Colonic mucosa (tissue), 4 donors: ENCODE measurements at regions of chr9 and their contacts with region 1.

Region 1: GRCh38 chr9:112361601-112362000 is 18.3 kb upstream of the HSDL2 start:
- DNase-seq: no peak
- H3K4me3 ChIP-seq: no peak overlapping the region
- H3K27ac ChIP-seq: no peak overlapping the region
- H3K4me1 ChIP-seq: no peaks in the 10 kb centered on the region
- H3K27me3 ChIP-seq: no peaks in the 10 kb centered on the region
- CTCF ChIP-seq: peak; percentile 61

Region 2: DNA sequence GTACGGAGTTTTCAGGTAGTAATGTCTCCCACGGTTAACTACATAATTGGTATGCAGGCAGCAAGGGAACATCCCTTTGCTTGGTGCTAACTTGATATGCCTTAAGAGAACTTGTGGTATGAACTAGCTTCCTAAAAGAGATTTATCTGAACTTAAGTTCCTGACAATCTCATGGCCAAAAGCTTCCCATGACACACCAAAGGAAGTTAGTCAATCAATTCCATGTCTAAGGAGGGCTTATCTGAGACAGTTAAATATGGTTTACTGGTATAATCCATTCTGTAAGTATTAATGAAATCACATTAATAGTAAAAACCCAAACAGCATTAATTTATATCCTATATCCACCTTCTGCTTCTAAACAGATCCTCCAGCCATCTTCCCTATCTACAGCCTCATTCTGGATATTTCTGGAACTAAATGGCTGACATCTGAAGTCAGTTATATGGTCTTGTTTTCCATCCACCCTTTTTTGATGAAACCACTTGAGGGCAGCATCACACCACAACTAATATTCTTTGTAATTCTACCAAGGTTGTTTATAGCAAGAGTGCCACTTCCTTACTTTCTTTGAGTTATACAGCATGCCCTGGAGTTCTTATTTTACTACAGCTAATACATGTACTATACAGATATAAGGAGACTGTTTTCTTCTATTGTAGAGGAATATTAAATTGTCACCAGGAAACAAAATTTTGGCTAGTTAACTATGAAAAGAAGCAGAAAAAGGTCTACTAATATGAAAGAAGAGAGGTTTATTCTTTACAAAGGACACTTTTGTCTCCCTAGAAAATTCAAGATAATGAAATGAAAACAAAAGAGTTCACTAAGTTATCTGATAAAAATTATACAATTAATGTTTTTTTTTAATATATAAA is 601.6 kb before region 1 on chr9:
- intact Hi-C with region 1: loop called (anchors 10 kb)
- DNase-seq: peak; percentile 71
- H3K4me3 ChIP-seq: no peak overlapping the region
- H3K27ac ChIP-seq: no peak overlapping the region
- H3K4me1 ChIP-seq: no peaks in the 10 kb centered on the region
- H3K27me3 ChIP-seq: no peaks in the 10 kb centered on the region
- CTCF ChIP-seq: peak; percentile 48

Region 3: DNA sequence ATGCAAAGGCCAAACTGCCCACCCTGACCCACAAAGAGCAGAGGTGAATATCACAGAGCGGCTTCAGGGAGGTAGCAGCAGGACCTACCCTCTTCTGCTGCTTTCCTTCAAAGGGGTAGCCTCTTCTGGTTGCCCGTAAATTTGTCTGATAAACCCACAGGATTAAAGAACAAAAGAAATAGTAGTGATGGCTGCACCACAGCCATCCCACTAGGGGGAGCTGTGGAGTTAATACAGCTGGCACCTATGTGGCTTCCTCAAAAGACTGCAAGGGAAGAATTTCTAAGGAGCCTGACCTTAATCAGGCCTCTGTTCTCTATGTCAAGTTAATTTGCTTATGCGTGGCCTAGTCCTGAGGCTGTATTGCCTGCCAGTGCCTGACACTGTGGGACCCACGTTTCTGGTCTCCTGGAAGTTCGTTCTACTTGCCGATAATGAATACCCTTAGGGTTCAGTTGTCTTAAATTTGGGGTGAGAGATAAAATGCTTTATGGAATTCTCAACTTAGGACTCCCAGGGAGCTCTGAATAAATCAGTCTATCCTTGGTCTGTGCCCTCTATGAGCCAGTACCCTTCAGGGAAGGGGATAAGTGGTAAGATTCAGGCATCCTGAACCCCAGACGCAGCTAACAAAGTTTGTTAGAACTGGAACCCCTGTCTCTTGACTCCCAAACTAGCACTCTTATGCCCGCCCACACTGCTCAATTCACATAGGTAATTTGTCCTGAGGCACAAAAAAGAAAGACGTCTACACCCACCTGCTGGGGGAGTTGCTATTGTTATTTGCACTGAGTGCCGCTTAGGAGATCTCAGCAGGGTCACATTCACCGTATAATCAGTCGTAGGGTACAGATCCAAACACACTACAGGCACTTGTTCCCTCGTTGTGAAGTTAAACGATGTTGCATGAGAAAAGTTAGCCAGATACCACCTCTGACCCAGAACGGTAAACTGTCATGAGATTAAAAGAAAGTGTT is 263.6 kb before region 1 on chr9:
- intact Hi-C with region 1: loop called (anchors 2 kb)
- DNase-seq: peak; percentile 77
- H3K4me3 ChIP-seq: no peak overlapping the region
- H3K27ac ChIP-seq: no peak overlapping the region
- H3K4me1 ChIP-seq: no peaks in the 10 kb centered on the region
- H3K27me3 ChIP-seq: no peaks in the 10 kb centered on the region
- CTCF ChIP-seq: peak; percentile 89

Region 4: DNA sequence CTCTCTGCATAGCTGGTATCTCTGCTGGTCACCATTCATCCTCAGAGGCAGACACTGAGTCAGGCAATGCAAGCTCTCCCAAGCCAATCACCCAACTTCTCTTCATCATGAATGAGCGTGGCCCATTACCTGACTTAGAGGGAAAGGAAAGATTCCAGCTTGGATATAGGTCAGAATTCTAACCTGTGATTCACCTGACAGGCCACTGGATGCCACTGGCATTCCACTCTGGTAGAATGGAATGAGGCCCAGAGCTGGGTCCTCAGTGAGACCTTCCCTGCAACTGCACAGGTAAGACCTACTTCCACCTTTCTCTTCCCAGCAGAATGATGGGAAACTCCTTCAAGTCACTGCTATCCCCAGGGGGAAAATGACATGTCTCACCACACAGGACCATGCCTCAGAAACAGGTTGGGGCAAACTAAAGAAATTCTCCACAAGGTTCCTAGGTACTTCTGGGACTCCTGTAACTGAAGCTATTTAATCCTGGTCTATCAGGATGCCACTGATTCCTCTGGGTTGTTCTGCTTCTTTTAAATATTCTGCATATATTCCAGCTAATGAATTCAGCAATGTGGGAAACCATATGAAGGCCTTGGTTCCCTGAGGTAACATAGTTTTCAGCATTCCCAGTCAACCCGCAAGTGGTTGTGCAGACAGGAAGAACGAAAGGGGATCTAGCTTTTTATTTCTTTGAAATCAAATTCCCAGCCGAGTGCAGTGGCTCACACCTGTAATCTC is 248.5 kb before region 1 on chr9:
- intact Hi-C with region 1: loop called (anchors 5 kb)
- DNase-seq: peak; percentile 48
- H3K4me3 ChIP-seq: no peak overlapping the region
- H3K27ac ChIP-seq: no peak overlapping the region
- H3K4me1 ChIP-seq: no peaks in the 10 kb centered on the region
- H3K27me3 ChIP-seq: no peaks in the 10 kb centered on the region
- CTCF ChIP-seq: peak; percentile 49